Heart left ventricle (tissue), 16 donors: ENCODE measurements at regions of chr3 and their contacts with region 1.

Region 1: GRCh38 chr3:177126015-177126773 is 71.1 kb downstream of the TBL1XR1 start:
- DNase-seq: no peak
- ATAC-seq: peak; percentile 53 to 88 (median 76)
- H3K4me3 ChIP-seq: no peak overlapping the region
- H3K27ac ChIP-seq: peak overlapping the region in 7 of 12 donors; percentile 2 to 29 (median 24)
- H3K4me1 ChIP-seq: peaks cover 0 to 66% (median 44%) of the 10 kb centered on the region in 12 donors
- H3K27me3 ChIP-seq: no peaks in the 10 kb centered on the region
- CTCF ChIP-seq: no peak
- POLR2A ChIP-seq: no peak

Region 2: DNA sequence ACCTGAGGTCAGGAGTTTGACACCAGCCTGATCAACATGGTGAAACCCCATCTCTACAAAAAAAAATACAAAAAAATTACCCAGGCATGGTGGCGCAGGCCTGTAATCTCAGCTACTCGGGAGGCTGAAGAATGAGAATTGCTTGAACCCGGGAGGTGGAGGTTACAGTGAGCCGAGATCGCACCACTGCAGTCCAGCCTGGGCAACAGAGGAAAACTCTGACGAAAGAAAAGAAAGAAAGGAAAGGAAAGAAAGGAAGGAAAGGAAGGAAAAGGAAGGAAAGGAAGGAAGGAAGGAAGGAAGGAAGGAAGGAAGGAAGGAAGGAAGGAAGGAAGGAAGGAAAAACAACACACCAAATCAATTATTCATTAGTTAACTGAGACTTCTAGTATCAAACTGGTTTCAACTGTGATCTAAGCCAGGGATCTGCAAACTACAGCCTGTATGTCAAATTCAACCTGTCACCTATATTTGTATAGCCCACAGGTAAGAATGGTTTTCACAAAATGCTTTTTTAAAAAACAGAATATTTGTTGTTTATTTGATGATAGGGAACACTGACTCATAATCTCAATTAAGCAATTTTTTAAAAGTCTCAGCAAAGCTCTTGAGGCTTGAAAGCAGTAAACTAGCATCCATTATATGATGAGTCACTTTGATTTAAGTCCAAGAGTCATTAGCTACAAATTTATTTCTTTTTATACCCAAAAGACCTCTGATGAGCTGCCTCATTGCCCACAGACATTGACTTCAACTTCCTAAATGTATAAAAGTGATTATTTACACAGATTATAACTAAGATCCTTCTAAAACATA is 56.5 kb before region 1 on chr3:
- intact Hi-C with region 1: loop called in 1 of 10 experiments (anchors 10 kb)
- DNase-seq: no peak
- ATAC-seq: no peak
- H3K4me3 ChIP-seq: no peak overlapping the region
- H3K27ac ChIP-seq: no peak overlapping the region
- H3K4me1 ChIP-seq: peaks cover 4 to 56% (median 21%) of the 10 kb centered on the region in 12 donors
- H3K27me3 ChIP-seq: no peaks in the 10 kb centered on the region
- CTCF ChIP-seq: no peak
- POLR2A ChIP-seq: no peak

Region 3: DNA sequence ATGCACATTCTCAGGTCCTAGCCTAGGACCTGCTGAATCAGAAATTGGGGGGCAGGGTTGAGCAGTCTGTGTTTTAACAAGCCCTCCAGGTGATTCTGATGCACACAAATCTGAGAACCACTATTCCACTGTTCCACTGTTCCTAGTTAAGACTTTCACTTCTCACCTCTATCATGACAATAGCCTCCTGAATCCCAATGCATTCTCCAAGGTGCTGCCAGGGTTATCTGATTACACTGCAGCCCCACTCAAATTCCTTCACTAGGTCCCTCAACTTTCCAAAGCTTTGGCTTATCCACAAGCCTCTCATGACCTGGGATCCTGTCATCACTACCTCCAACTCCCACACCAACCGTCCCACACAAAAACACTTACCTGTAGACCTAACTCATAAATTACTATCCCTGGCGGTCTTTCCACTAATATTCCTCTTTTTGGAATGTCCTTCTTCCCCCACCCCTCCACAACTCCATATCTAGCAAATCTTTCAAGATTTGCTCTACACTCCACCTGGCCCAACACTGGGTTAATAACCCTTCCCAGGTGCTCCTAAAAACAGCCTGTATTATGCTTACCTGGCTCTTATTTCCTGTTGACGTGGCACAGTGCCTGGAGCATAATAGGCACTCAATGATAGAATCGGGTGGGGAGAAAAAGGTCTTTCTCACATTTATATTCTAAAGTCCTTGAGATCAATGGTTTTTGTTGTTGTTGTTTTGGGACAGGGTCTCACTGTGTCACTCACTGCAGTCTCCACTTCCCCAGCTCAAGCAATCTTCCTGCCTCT is 43.9 kb after region 1 on chr3:
- intact Hi-C with region 1: no loop called
- DNase-seq: no peak
- ATAC-seq: no peak
- H3K4me3 ChIP-seq: no peak overlapping the region
- H3K27ac ChIP-seq: no peak overlapping the region
- H3K4me1 ChIP-seq: peaks cover 0 to 63% (median 29%) of the 10 kb centered on the region in 12 donors
- H3K27me3 ChIP-seq: no peaks in the 10 kb centered on the region
- CTCF ChIP-seq: no peak
- POLR2A ChIP-seq: no peak

Region 4: GRCh38 chr3:177491296-177492032 is 365.3 kb after region 1 on chr3:
- intact Hi-C with region 1: loop called in 1 of 10 experiments (anchors 5 kb)
- DNase-seq: peak in 3 of 5 donors; percentile 25 to 58 (median 30)
- ATAC-seq: peak in 3 of 4 donors; percentile 63 to 83 (median 74)
- H3K4me3 ChIP-seq: no peak overlapping the region
- H3K27ac ChIP-seq: peak overlapping the region in 7 of 12 donors; percentile 8 to 60 (median 52)
- H3K4me1 ChIP-seq: peaks cover 0 to 25% (median 15%) of the 10 kb centered on the region in 12 donors
- H3K27me3 ChIP-seq: no peaks in the 10 kb centered on the region
- CTCF ChIP-seq: no peak
- POLR2A ChIP-seq: no peak

Region 5: GRCh38 chr3:177657243-177657642 is 531.0 kb after region 1 on chr3:
- intact Hi-C with region 1: no loop called
- DNase-seq: no peak
- ATAC-seq: no peak
- H3K4me3 ChIP-seq: no peak overlapping the region
- H3K27ac ChIP-seq: no peak overlapping the region
- H3K4me1 ChIP-seq: peaks cover 0 to 22% (median 9%) of the 10 kb centered on the region in 12 donors
- H3K27me3 ChIP-seq: no peaks in the 10 kb centered on the region
- CTCF ChIP-seq: no peak
- POLR2A ChIP-seq: no peak